AG04450 (cell line): ENCODE measurements at regions of chr11 and their contacts with region 1.

Region 1: GRCh38 chr11:32052218-32052617 is 38.7 kb upstream of the RCN1 start:
- DNase-seq: peak; percentile 15
- H3K4me3 ChIP-seq: no peak overlapping the region
- H3K27ac ChIP-seq: no peak overlapping the region
- H3K27me3 ChIP-seq: peaks cover 27% of the 10 kb centered on the region
- CTCF ChIP-seq: peak; percentile 73

Region 2: GRCh38 chr11:32034149-32034548 is 18.1 kb before region 1 on chr11:
- CTCF ChIA-PET with region 1: interaction called, 17 read pairs
- POLR2A ChIA-PET with region 1: no interaction called
- DNase-seq: peak; percentile 79
- H3K4me3 ChIP-seq: no peak overlapping the region
- H3K27ac ChIP-seq: no peak overlapping the region
- H3K27me3 ChIP-seq: no peaks in the 10 kb centered on the region
- CTCF ChIP-seq: no peak

Region 3: GRCh38 chr11:32071811-32072210 is 19.6 kb after region 1 on chr11:
- CTCF ChIA-PET with region 1: interaction called, 52 read pairs
- POLR2A ChIA-PET with region 1: no interaction called
- DNase-seq: no peak
- H3K4me3 ChIP-seq: no peak overlapping the region
- H3K27ac ChIP-seq: no peak overlapping the region
- H3K27me3 ChIP-seq: peaks cover 23% of the 10 kb centered on the region
- CTCF ChIP-seq: peak; percentile 67

Region 4: DNA sequence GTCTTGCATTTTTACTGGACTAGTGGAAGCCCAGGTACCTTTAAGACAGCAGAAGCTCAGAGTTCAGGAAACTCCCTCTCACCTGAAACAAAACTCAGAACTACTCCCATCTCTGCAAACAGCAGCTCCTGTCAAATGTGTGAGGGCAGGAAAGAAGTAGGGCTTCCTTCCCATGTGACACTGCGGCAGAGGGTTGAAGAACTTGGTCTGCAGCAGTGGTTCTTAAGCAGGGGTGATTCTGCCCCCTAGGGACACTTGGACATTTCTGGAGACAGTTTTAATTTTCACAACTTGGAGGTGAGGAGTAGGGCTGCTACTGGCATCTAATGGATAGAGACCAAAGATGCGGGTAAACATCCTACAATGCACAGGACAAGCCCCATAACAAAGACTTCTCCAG is 102.1 kb after region 1 on chr11:
- CTCF ChIA-PET with region 1: interaction called, 36 read pairs
- POLR2A ChIA-PET with region 1: no interaction called
- DNase-seq: no peak
- H3K4me3 ChIP-seq: no peak overlapping the region
- H3K27ac ChIP-seq: no peak overlapping the region
- H3K27me3 ChIP-seq: peaks cover 9% of the 10 kb centered on the region
- CTCF ChIP-seq: peak; percentile 40